Adrenal gland (tissue), 19 donors: ENCODE measurements at regions of chr10 and their contacts with region 1.

Region 1: GRCh38 chr10:77168161-77168560 is 469.4 kb downstream of the KCNMA1 start:
- DNase-seq: no peak
- H3K4me3 ChIP-seq: no peak overlapping the region
- H3K27ac ChIP-seq: no peak overlapping the region
- H3K4me1 ChIP-seq: peaks cover 0 to 7% of the 10 kb centered on the region in 2 donors
- H3K27me3 ChIP-seq: no peaks in the 10 kb centered on the region
- CTCF ChIP-seq: no peak
- POLR2A ChIP-seq: no peak

Region 2: DNA sequence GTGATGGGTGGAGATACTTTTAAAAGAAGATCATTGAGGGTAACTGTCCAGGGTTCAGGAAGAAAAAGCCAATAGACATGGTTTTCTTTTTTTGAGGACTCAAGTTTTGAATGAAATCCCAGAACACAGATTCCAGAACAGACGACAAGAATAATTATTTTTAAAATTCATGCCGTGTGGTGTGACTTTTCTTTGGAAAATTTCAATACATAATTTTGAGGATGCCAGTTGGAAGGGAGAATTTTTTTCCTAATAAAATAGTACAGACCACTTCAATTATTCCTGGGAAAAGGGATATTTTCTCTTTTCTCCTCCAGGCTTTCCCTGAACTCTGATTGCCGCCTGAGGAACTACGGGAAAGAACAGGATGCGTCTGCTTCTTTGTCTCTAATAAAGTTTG is 482.0 kb before region 1 on chr10:
- intact Hi-C with region 1: no loop called
- DNase-seq: no peak
- H3K4me3 ChIP-seq: no peak overlapping the region
- H3K27ac ChIP-seq: no peak overlapping the region
- H3K4me1 ChIP-seq: no peaks in the 10 kb centered on the region
- H3K27me3 ChIP-seq: peaks cover 4% of the 10 kb centered on the region
- CTCF ChIP-seq: no peak
- POLR2A ChIP-seq: no peak

Region 3: GRCh38 chr10:77230194-77230593 is 62.0 kb after region 1 on chr10:
- intact Hi-C with region 1: no loop called
- DNase-seq: no peak
- H3K4me3 ChIP-seq: no peak overlapping the region
- H3K27ac ChIP-seq: no peak overlapping the region
- H3K4me1 ChIP-seq: no peaks in the 10 kb centered on the region
- H3K27me3 ChIP-seq: no peaks in the 10 kb centered on the region
- CTCF ChIP-seq: no peak
- POLR2A ChIP-seq: no peak

Region 4: GRCh38 chr10:77647543-77648293 is 479.6 kb after region 1 on chr10:
- intact Hi-C with region 1: loop called in 1 of 2 experiments (anchors 2 kb)
- DNase-seq: no peak
- H3K4me3 ChIP-seq: no peak overlapping the region
- H3K27ac ChIP-seq: no peak overlapping the region
- H3K4me1 ChIP-seq: no peaks in the 10 kb centered on the region
- H3K27me3 ChIP-seq: no peaks in the 10 kb centered on the region
- CTCF ChIP-seq: no peak
- POLR2A ChIP-seq: no peak